ENCODE measurements at regions of chr20 and their contacts with region 1.

Region 1: GRCh38 chr20:6940046-6940445 is 172.6 kb downstream of the BMP2 start:
- DNase-seq: no peak
- ATAC-seq: peak; percentile 80
- H3K4me3 ChIP-seq: no peak overlapping the region
- H3K27ac ChIP-seq: no peak overlapping the region
- H3K4me1 ChIP-seq: no peaks in the 10 kb centered on the region
- H3K27me3 ChIP-seq: no peaks in the 10 kb centered on the region
- CTCF ChIP-seq: peak; percentile 16 to 61 (median 28); a peak in 4 of 6 replicates
- EP300 ChIP-seq: no peak
- POLR2A ChIP-seq: no peak
- RAD21 ChIP-seq: peak; percentile 16; the same call in 1 of the 2 replicates

Region 2: DNA sequence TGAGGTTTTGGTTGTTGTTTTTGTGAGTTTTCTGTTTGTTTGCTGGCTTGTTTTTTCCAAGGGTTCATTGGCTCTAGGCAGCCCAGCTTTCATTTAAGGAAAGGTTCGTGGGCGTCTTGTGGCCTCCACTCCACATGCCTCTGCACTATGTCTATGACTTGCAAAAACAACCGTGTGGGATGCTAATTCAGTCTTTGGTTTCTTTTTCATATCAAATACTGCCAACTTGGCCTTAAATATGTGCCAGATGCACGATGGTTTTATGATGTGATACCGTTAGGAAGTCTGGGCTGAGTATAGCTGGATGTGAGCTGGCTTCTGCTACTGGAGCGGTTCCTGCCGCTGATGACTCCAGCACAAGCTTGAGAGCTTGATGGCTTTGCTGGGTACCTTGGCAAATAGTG is 76.2 kb before region 1 on chr20:
- CTCF ChIA-PET with region 1: interaction called, 15 read pairs
- POLR2A ChIA-PET with region 1: interaction called, 3 read pairs
- RAD21 ChIA-PET with region 1: interaction called, 22 read pairs
- SMC1A ChIA-PET with region 1: interaction called, 9 read pairs
- in situ Hi-C with region 1: no loop called
- intact Hi-C with region 1: no loop called
- DNase-seq: no peak
- ATAC-seq: peak; percentile 60
- H3K4me3 ChIP-seq: no peak overlapping the region
- H3K27ac ChIP-seq: no peak overlapping the region
- H3K4me1 ChIP-seq: no peaks in the 10 kb centered on the region
- H3K27me3 ChIP-seq: no peaks in the 10 kb centered on the region
- CTCF ChIP-seq: no peak
- EP300 ChIP-seq: no peak
- POLR2A ChIP-seq: no peak
- RAD21 ChIP-seq: no peak

Region 3: DNA sequence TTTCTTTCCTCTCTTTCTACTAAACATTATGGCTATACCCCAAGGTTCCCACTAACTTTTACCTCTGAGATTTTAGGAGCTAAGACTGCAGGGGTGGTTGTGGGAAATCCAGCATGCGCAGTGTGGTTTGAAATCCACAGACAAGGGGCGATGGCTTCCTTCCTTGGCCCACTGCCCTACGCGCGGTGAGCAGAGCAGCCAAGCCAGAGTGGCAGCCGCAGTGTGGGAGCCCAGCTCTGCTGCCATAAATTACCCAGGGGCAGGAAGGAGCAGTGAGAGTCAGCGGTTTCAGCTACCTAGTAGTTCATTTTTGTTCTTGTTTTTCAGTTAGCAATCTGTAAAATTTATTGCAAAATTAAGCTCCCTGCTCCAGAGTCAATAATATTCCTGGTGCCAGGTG is 71.2 kb before region 1 on chr20:
- CTCF ChIA-PET with region 1: interaction called, 15 read pairs
- POLR2A ChIA-PET with region 1: no interaction called
- RAD21 ChIA-PET with region 1: interaction called, 22 read pairs
- SMC1A ChIA-PET with region 1: interaction called, 9 read pairs
- in situ Hi-C with region 1: no loop called
- intact Hi-C with region 1: no loop called
- DNase-seq: no peak
- ATAC-seq: peak; percentile 68
- H3K4me3 ChIP-seq: no peak overlapping the region
- H3K27ac ChIP-seq: no peak overlapping the region
- H3K4me1 ChIP-seq: no peaks in the 10 kb centered on the region
- H3K27me3 ChIP-seq: no peaks in the 10 kb centered on the region; a peak in 1 of 4 replicates
- CTCF ChIP-seq: no peak
- EP300 ChIP-seq: no peak
- POLR2A ChIP-seq: no peak
- RAD21 ChIP-seq: no peak

Region 4: DNA sequence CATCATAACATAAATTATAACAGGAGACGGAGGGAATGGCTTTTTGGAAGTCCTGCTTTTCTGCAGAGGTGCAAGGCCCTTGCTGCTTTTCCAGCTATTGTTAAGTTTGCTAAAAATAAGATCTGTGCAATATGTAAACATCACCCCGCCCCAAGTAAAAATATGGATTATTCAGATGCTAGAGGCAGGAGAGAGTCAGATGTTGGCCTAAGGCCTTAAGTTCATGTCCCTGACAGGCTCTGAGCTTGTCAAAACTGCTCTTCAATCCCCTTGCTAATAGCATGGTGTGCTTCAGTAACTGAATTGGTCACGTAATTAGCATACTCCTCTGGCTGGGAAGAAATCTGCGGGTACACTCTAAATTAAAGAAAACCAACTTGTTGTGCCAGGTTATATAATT is 25.1 kb before region 1 on chr20:
- CTCF ChIA-PET with region 1: interaction called, 35 read pairs
- POLR2A ChIA-PET with region 1: interaction called, 35 read pairs
- RAD21 ChIA-PET with region 1: interaction called, 11 read pairs
- SMC1A ChIA-PET with region 1: interaction called, 80 read pairs
- in situ Hi-C with region 1: no loop called
- intact Hi-C with region 1: no loop called
- DNase-seq: no peak
- ATAC-seq: peak; percentile 47
- H3K4me3 ChIP-seq: no peak overlapping the region
- H3K27ac ChIP-seq: no peak overlapping the region
- H3K4me1 ChIP-seq: no peaks in the 10 kb centered on the region
- H3K27me3 ChIP-seq: no peaks in the 10 kb centered on the region
- CTCF ChIP-seq: no peak
- EP300 ChIP-seq: no peak
- POLR2A ChIP-seq: no peak
- RAD21 ChIP-seq: no peak

Region 5: GRCh38 chr20:6956574-6956973 is 16.5 kb after region 1 on chr20:
- CTCF ChIA-PET with region 1: interaction called, 8 read pairs
- POLR2A ChIA-PET with region 1: interaction called, 3 read pairs
- RAD21 ChIA-PET with region 1: no interaction called
- SMC1A ChIA-PET with region 1: interaction called, 16 read pairs
- in situ Hi-C with region 1: no loop called
- intact Hi-C with region 1: no loop called
- DNase-seq: no peak
- ATAC-seq: peak; percentile 69
- H3K4me3 ChIP-seq: no peak overlapping the region
- H3K27ac ChIP-seq: no peak overlapping the region
- H3K4me1 ChIP-seq: no peaks in the 10 kb centered on the region
- H3K27me3 ChIP-seq: no peaks in the 10 kb centered on the region
- CTCF ChIP-seq: no peak
- EP300 ChIP-seq: no peak
- POLR2A ChIP-seq: no peak
- RAD21 ChIP-seq: no peak

Region 6: GRCh38 chr20:7123457-7123856 is 183.4 kb after region 1 on chr20:
- CTCF ChIA-PET with region 1: no interaction called
- POLR2A ChIA-PET with region 1: no interaction called
- RAD21 ChIA-PET with region 1: no interaction called
- SMC1A ChIA-PET with region 1: no interaction called
- in situ Hi-C with region 1: no loop called
- intact Hi-C with region 1: no loop called
- DNase-seq: no peak
- ATAC-seq: no peak
- H3K4me3 ChIP-seq: no peak overlapping the region
- H3K27ac ChIP-seq: no peak overlapping the region
- H3K4me1 ChIP-seq: no peaks in the 10 kb centered on the region
- H3K27me3 ChIP-seq: no peaks in the 10 kb centered on the region
- CTCF ChIP-seq: no peak
- EP300 ChIP-seq: no peak
- POLR2A ChIP-seq: no peak
- RAD21 ChIP-seq: no peak

Region 7: DNA sequence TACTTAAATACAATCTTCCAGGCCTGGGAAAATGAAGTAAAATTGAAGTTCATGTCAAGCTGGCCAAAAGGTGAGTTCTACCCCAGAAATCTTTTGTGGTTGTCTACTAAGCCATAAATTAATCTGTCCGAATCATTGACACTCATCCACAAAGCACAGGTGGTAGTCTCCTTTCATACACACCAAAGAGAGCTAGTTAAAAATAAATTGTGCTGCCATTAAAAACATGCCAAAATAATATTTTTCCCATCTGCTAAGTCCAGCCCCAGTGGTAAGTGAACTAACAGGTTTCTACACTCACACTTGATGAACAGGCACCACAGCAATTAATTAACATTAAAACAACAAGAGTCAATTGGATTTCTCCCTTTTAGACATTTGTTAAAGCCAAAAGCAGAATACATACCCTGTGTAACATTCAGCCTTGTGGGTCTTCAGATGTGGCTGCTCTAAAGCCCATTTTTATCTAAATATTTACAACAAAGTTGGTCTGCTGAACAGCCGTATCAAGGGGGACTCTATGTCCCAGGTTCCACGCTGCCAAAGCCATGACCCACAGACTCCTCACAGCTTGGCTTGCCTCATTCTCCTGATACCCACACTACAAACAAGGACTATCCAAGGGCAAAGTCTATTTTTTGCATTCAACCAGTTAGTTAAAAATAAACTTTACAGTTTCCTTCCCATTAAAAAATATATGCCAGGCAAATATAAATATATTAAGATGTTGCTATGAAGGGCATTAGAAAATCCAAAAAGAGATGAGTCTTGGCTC is 317.8 kb after region 1 on chr20:
- CTCF ChIA-PET with region 1: no interaction called
- POLR2A ChIA-PET with region 1: no interaction called
- RAD21 ChIA-PET with region 1: no interaction called
- SMC1A ChIA-PET with region 1: no interaction called
- in situ Hi-C with region 1: no loop called
- intact Hi-C with region 1: no loop called
- DNase-seq: no peak
- ATAC-seq: no peak
- H3K4me3 ChIP-seq: no peak overlapping the region
- H3K27ac ChIP-seq: no peak overlapping the region
- H3K4me1 ChIP-seq: no peaks in the 10 kb centered on the region
- H3K27me3 ChIP-seq: no peaks in the 10 kb centered on the region
- CTCF ChIP-seq: no peak
- EP300 ChIP-seq: no peak
- POLR2A ChIP-seq: no peak
- RAD21 ChIP-seq: no peak

Measured in GM12878 (cell line).